Left cardiac atrium (tissue), 4 donors: ENCODE measurements at regions of chr10 and their contacts with region 1.

Region 1: GRCh38 chr10:114304017-114304570 is 65.0 kb downstream of the VWA2 start:
- DNase-seq: peak; percentile 85
- ATAC-seq: peak; percentile 83 to 84

Region 2: GRCh38 chr10:114388275-114388674 is 84.2 kb after region 1 on chr10:
- intact Hi-C with region 1: no loop called
- DNase-seq: no peak
- ATAC-seq: no peak

Region 3: GRCh38 chr10:114403541-114404161 is 99.6 kb after region 1 on chr10:
- intact Hi-C with region 1: loop called (anchors 10 kb)
- DNase-seq: peak; percentile 47
- ATAC-seq: peak; percentile 59 to 69

Region 4: DNA sequence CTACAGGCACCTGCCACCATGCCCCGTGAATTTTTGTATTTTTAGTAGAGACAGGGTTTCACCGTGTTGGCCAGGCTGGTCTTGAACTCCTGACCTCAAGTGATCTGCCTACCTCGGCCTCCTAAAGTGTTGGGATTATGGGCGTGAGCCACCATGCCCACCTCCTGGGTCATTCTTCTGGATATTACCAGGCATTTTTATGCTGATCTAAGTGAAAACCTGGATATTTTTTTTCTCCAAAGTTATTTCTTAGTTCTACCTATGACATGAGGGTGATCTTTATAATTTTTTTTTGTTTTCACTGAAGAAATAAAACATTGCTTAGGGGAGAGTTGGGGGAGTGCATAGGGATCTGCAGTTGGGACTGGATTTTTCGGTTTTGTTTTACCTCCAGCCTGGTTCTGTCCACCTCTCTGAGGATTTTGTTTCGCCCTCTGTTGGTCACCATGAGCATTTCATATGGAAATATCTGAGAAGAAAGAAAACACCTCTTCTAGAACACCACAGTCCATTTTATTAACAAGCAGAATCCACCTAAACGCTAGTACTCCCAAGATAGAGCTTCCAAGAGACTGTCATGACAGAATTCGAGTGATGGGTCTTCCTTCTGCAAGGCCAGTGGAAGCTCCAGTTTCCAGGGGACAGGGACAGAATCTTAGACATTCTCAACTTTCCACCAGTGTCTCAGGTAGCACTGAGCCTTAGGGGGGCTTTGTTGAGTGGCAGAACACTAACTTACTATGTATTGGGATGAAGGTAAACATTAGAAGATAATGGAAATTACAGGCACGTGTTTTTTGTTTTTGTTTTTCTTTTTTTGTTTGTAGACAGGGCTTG is 133.6 kb after region 1 on chr10:
- intact Hi-C with region 1: loop called in 1 of 2 experiments (anchors 5 kb)
- DNase-seq: no peak
- ATAC-seq: no peak